B cell (primary cell): ENCODE measurements at regions of chr14 and their contacts with region 1.

Region 1: GRCh38 chr14:105414456-105415371 is 4.9 kb upstream of the MTA1 start:
- DNase-seq: peak; percentile 78
- ATAC-seq: peak; percentile 78
- H3K4me3 ChIP-seq: peak overlapping the region in 4 of 5 experiments; percentile 19 to 71 (median 53)
- H3K4me3 Mint-ChIP-seq: peak overlapping the region; percentile 83
- H3K27ac ChIP-seq: no peak overlapping the region
- H3K27ac Mint-ChIP-seq: no peak overlapping the region
- H3K4me1 ChIP-seq: peaks cover 28 to 31% of the 10 kb centered on the region in 2 donors
- H3K4me1 Mint-ChIP-seq: peaks cover 26% of the 10 kb centered on the region
- H3K27me3 ChIP-seq: peaks cover 0 to 36% (median 15%) of the 10 kb centered on the region in 4 experiments
- H3K27me3 Mint-ChIP-seq: peaks cover 11% of the 10 kb centered on the region
- CTCF ChIP-seq: peak; percentile 91

Region 2: DNA sequence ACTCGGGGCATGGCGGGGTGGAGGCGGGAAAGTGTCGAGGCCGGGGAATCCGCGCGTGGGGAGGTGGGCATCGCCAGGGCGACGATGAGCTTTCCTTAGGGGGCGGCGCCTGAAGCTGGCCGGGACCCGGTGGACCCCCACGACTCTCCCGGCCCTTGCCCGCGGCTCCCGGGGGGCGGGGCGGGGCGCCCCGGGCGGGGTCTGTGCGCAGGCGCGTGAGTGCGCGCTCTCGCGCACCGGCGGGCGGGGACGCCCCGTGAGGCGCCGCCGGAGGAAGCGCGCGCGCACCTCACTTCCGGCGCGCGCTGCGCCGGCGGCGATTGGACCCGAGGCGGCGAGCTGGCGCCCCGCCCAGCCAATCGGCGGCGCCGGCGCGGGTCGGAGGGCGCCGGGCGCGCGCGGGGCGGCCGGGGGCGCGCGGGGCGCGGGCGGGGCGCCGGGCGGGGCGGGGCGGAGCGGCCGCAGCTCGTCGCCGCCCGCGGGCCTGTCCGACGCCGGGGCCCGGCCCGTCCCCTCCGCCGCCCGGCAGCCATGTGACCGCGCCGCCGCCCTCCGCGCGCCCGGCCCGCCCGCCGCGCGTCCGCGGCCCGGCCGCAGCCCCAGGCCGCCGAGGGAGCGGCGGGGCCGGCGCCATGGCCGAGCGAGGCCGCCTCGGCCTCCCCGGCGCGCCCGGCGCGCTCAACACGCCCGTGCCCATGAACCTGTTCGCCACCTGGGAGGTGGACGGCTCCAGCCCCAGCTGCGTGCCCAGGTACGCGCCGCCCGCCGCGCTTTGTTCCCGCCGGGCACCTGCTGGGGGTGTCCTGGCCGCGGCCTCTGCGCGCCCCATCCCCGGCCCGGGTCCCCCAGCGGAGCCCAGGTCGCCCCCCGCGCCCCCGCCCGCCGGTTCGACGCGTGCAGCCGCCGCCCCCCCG is 100.2 kb before region 1 on chr14 and contains the start of gene PACS2:
- CTCF ChIA-PET with region 1: no interaction called
- POLR2A ChIA-PET with region 1: no interaction called
- intact Hi-C with region 1: no loop called
- DNase-seq: peak; percentile 92
- ATAC-seq: peak; percentile 80
- H3K4me3 ChIP-seq: peak within 1 kb of the TSS; percentile 5 to 67 (median 59)
- H3K4me3 Mint-ChIP-seq: peak within 1 kb of the TSS; percentile 93
- H3K27ac ChIP-seq: peak within 1 kb of the TSS in 1 of 2 donors; percentile 64
- H3K27ac Mint-ChIP-seq: peak within 1 kb of the TSS; percentile 94
- H3K4me1 ChIP-seq: peaks cover 13 to 22% of the 10 kb centered on the region in 2 donors
- H3K4me1 Mint-ChIP-seq: peaks cover 11% of the 10 kb centered on the region
- H3K27me3 ChIP-seq: no peaks in the 10 kb centered on the region
- H3K27me3 Mint-ChIP-seq: no peaks in the 10 kb centered on the region
- CTCF ChIP-seq: no peak
- total RNA-seq, gene PACS2: 70.7 and 71.8 TPM in 2 replicates

Region 3: DNA sequence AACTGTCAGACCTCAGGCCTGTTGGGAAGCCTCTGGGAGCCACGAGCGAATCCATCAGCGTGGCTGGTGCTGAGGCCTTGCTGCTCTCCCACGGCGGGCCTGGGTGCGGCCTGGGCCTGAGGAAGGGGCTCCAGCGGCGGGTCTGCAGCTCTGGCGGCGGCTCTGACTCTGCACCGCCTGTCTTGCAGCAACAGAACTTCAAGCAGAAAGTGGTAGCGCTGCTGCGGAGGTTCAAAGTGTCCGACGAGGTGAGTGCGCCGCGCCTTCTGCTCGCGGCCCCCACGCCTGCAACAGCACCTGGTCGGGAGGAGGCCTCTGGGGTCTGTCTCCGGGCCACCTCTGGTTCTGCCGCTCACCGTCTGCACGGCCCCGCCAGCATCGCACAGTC is 45.1 kb before region 1 on chr14:
- CTCF ChIA-PET with region 1: interaction called, 5 read pairs
- POLR2A ChIA-PET with region 1: no interaction called
- intact Hi-C with region 1: loop called (anchors 2 kb)
- DNase-seq: no peak
- ATAC-seq: no peak
- H3K4me3 ChIP-seq: no peak overlapping the region
- H3K4me3 Mint-ChIP-seq: no peak overlapping the region
- H3K27ac ChIP-seq: no peak overlapping the region
- H3K27ac Mint-ChIP-seq: no peak overlapping the region
- H3K4me1 ChIP-seq: peaks cover 5 to 11% of the 10 kb centered on the region in 2 donors
- H3K4me1 Mint-ChIP-seq: peaks cover 3% of the 10 kb centered on the region
- H3K27me3 ChIP-seq: no peaks in the 10 kb centered on the region
- H3K27me3 Mint-ChIP-seq: no peaks in the 10 kb centered on the region
- CTCF ChIP-seq: no peak

Region 4: GRCh38 chr14:105398044-105398725 is 16.5 kb before region 1 on chr14 and contains the start of gene TEX22:
- CTCF ChIA-PET with region 1: interaction called, 5 read pairs
- POLR2A ChIA-PET with region 1: interaction called, 3 read pairs
- intact Hi-C with region 1: loop called (anchors 1 kb)
- DNase-seq: peak; percentile 93
- ATAC-seq: peak; percentile 88
- H3K4me3 ChIP-seq: peak within 1 kb of the TSS; percentile 31 to 94 (median 86)
- H3K4me3 Mint-ChIP-seq: peak within 1 kb of the TSS; percentile 90
- H3K27ac ChIP-seq: peak within 1 kb of the TSS; percentile 75 to 86
- H3K27ac Mint-ChIP-seq: peak within 1 kb of the TSS; percentile 91
- H3K4me1 ChIP-seq: peaks cover 16 to 23% of the 10 kb centered on the region in 2 donors
- H3K4me1 Mint-ChIP-seq: peaks cover 16% of the 10 kb centered on the region
- H3K27me3 ChIP-seq: no peaks in the 10 kb centered on the region
- H3K27me3 Mint-ChIP-seq: no peaks in the 10 kb centered on the region
- CTCF ChIP-seq: peak; percentile 36
- total RNA-seq, gene TEX22: 7.0 and 8.4 TPM in 2 replicates

Region 5: DNA sequence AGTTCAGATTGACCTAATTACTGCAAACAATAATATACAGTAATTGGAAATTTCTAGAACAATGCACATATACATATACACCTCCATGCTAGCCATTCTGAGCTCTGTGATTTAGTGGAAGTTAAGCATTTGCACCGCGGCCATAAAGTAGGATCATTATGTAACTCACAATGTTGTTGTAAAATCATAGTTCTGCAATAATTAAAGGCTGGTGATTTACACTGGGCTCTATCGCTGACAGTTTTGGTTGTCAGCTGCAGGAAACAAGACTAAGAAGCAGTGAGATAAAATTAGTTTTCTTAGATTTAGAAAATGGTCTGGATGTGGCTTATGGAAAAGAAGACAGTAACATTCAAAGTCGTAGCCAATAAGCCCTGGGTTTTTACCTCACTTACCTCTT is 887.9 kb after region 1 on chr14:
- CTCF ChIA-PET with region 1: no interaction called
- POLR2A ChIA-PET with region 1: no interaction called
- intact Hi-C with region 1: no loop called
- DNase-seq: no peak
- ATAC-seq: no peak
- H3K4me3 ChIP-seq: no peak overlapping the region
- H3K4me3 Mint-ChIP-seq: no peak overlapping the region
- H3K27ac ChIP-seq: no peak overlapping the region
- H3K27ac Mint-ChIP-seq: no peak overlapping the region
- H3K4me1 ChIP-seq: peaks cover 20 to 21% of the 10 kb centered on the region in 2 donors
- H3K4me1 Mint-ChIP-seq: peaks cover 38% of the 10 kb centered on the region
- H3K27me3 ChIP-seq: peaks cover 0 to 2% (median 0%) of the 10 kb centered on the region in 4 experiments
- H3K27me3 Mint-ChIP-seq: peaks cover 5% of the 10 kb centered on the region
- CTCF ChIP-seq: no peak